Psoas muscle (tissue), 8 donors: ENCODE measurements at regions of chr9 and their contacts with region 1.

Region 1: GRCh38 chr9:96418074-96418809 is at the start of gene ZNF367:
- DNase-seq: peak; percentile 98 to 99
- ATAC-seq: peak; percentile 89 to 92 (median 90)
- H3K4me3 ChIP-seq: peak within 1 kb of the TSS; percentile 80
- H3K27ac ChIP-seq: peak within 1 kb of the TSS; percentile 95
- H3K4me1 ChIP-seq: peaks cover 27% of the 10 kb centered on the region
- H3K27me3 ChIP-seq: no peaks in the 10 kb centered on the region
- CTCF ChIP-seq: no peak
- total RNA-seq, gene ZNF367: 0.69 to 1.9 (median 1.2) TPM

Region 2: GRCh38 chr9:96327694-96328352 is 90.4 kb before region 1 on chr9:
- intact Hi-C with region 1: loop called in 1 of 2 experiments (anchors 5 kb)
- DNase-seq: no peak
- ATAC-seq: peak in 3 of 4 donors; percentile 69 to 75 (median 71)
- H3K4me3 ChIP-seq: no peak overlapping the region
- H3K27ac ChIP-seq: no peak overlapping the region
- H3K4me1 ChIP-seq: no peaks in the 10 kb centered on the region
- H3K27me3 ChIP-seq: no peaks in the 10 kb centered on the region
- CTCF ChIP-seq: peak; percentile 78